HEK293 (cell line): ENCODE measurements at regions of chr9 and their contacts with region 1.

Region 1: GRCh38 chr9:97921959-97922724 is at the start of gene TRMO:
- H3K4me3 ChIP-seq: peak within 1 kb of the TSS; percentile 83
- H3K27ac ChIP-seq: peak within 1 kb of the TSS; percentile 27
- H3K4me1 ChIP-seq: no peaks in the 10 kb centered on the region
- CTCF ChIP-seq: peak; percentile 96

Region 2: DNA sequence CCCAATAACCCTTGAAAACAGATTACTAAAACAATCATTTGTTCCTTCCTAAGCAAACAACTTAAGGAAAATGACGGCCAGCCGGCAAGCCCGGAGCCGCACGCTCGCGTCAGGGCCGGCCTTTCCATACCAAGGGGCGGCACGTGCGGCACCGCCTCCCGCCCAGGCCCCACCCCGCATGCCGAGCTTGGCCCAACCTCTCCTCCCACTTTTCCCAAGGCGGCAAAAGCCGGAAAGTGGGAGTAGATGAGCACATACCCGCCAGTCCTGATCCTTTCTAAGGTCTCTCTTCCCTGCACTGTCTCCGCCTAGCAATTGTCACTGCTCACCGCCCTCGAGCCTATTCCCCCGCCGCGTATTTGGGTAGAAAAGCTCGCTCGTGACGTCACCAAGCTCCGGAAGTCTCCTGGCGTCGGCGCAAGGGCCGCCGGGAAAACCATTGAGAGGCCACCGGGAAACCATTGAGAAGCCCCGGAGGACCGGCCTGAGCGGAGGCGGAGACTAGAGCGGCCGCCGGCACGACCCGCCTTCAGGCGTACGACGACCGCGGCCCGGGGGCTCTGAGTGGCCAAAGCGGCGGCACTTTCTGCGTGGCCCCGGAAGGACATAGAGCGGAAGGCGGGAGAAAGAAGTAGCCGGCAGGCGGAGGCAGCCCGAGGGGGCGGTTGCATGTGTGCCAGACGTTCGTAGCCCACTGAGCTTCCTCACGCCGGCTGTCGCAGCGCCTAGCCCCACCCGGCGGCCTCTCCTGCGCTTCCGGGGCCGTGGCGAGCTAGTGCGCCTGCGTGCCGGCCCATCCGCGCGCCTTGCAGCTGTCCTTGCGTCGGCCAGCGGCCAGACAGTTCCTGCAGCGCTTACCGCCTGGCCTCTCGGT is 288.9 kb before region 1 on chr9 and contains the starts of genes NCBP1 and TSTD2:
- CTCF ChIA-PET with region 1: interaction called, 4 read pairs
- POLR2A ChIA-PET with region 1: interaction called, 12 read pairs
- H3K4me3 ChIP-seq: peak within 1 kb of the TSS; percentile 97
- H3K27ac ChIP-seq: peak within 1 kb of the TSS; percentile 92
- H3K4me1 ChIP-seq: no peaks in the 10 kb centered on the region; the same call in 1 of the 2 replicates
- CTCF ChIP-seq: no peak; the same call in 1 of the 2 replicates

Region 3: GRCh38 chr9:97773723-97774122 is 148.4 kb before region 1 on chr9:
- CTCF ChIA-PET with region 1: no interaction called
- POLR2A ChIA-PET with region 1: no interaction called
- H3K4me3 ChIP-seq: no peak overlapping the region
- H3K27ac ChIP-seq: no peak overlapping the region
- H3K4me1 ChIP-seq: no peaks in the 10 kb centered on the region
- CTCF ChIP-seq: no peak

Region 4: DNA sequence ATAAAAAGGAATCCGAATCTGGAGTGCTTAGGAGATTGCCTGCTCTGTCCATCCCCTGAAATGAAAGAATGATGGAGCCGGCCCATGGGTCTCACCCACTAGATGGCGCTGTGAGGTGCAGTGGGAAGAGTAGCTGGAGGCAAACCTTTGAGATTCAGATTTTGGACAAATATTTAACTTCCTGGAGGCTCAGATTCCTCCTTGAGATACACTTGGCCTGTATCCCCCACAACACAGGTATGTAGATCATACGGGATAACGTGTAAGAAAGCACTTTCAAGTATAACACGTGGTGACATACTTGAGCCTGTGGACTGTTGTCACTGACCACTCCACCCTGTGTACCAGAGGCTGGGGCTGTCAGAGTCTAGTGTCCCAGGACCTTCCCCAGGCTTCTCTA is 32.1 kb before region 1 on chr9:
- CTCF ChIA-PET with region 1: interaction called, 16 read pairs
- POLR2A ChIA-PET with region 1: interaction called, 3 read pairs
- H3K4me3 ChIP-seq: no peak overlapping the region
- H3K27ac ChIP-seq: no peak overlapping the region
- H3K4me1 ChIP-seq: no peaks in the 10 kb centered on the region
- CTCF ChIP-seq: no peak

Region 5: GRCh38 chr9:97934321-97935115 is 12.4 kb after region 1 on chr9:
- CTCF ChIA-PET with region 1: interaction called, 13 read pairs
- POLR2A ChIA-PET with region 1: interaction called, 3 read pairs
- H3K4me3 ChIP-seq: no peak overlapping the region
- H3K27ac ChIP-seq: no peak overlapping the region
- H3K4me1 ChIP-seq: no peaks in the 10 kb centered on the region
- CTCF ChIP-seq: no peak

Region 6: GRCh38 chr9:97954550-97954989 is 32.4 kb after region 1 on chr9:
- CTCF ChIA-PET with region 1: interaction called, 30 read pairs
- POLR2A ChIA-PET with region 1: interaction called, 4 read pairs
- H3K4me3 ChIP-seq: no peak overlapping the region
- H3K27ac ChIP-seq: no peak overlapping the region
- H3K4me1 ChIP-seq: no peaks in the 10 kb centered on the region
- CTCF ChIP-seq: peak; percentile 33

Region 7: DNA sequence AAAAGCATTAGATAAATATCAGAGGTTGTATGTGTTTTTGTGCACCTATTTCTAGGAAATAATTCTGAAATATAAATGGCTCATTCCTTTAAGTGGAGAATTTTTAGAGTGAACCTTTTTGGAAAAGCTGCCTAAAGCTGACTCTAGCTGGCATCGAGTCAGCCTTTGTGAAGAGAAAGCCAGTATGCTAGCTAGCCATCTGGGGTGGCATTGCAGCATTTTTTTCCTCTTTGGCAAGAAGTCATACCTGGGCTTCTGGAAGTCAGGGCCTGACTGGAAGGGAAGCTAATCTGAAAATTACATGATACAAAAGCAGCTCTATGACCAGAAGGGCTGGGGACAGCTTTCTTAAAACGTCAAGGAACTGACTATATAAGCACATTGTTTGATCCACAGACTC is 80.7 kb after region 1 on chr9:
- CTCF ChIA-PET with region 1: interaction called, 10 read pairs
- POLR2A ChIA-PET with region 1: interaction called, 3 read pairs
- H3K4me3 ChIP-seq: no peak overlapping the region
- H3K27ac ChIP-seq: no peak overlapping the region
- H3K4me1 ChIP-seq: no peaks in the 10 kb centered on the region
- CTCF ChIP-seq: no peak

Region 8: DNA sequence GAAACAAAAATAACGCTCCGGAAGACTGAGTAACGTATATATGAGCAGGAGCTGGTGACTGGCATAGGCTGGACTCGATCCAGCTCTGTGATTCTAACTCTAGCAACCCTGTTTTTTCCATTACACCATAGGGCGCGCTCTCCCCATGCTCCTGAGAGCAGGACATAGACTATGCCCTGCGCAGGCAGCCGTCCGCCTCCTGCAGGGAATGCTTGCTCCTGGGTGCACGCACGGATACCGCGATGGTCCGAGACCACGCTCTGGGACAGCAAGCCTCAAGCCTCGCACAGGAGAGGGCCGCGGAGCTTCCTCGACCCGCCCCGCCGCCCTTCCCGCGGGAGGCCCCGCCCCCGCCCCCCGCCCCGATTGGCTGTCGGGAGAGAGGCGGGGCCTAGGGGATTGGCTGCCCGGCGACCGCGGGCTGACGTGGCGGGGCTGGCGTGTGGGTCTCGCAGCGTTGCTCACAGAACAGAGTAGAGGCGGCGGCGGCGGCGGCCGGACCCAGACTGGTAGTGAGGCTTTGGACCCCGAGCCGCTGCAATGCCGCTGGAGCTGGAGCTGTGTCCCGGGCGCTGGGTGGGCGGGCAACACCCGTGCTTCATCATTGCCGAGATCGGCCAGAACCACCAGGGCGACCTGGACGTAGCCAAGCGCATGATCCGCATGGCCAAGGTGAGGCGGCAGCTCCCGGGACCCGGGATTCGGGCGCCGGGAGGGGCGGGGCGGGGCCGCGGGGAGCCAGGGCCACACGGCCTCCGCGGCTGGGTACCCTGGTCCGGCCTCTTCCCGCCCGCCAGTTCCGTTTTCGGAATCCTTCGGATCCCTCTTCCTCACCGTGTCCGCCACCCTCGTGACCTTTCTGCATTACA is 134.4 kb after region 1 on chr9 and contains the start of gene NANS:
- CTCF ChIA-PET with region 1: interaction called, 6 read pairs
- POLR2A ChIA-PET with region 1: interaction called, 13 read pairs
- H3K4me3 ChIP-seq: peak within 1 kb of the TSS; percentile 83
- H3K27ac ChIP-seq: peak within 1 kb of the TSS; percentile 47
- H3K4me1 ChIP-seq: no peaks in the 10 kb centered on the region
- CTCF ChIP-seq: peak; percentile 46; the same call in 1 of the 2 replicates